ENCODE measurements at regions of chr12 and their contacts with region 1.

Region 1: GRCh38 chr12:49644620-49644994 is 21.2 kb downstream of the PRPF40B start:
- DNase-seq: peak; percentile 51
- H3K4me3 ChIP-seq: no peak overlapping the region
- H3K27ac ChIP-seq: peak overlapping the region; percentile 37
- H3K4me1 ChIP-seq: peaks cover 17% of the 10 kb centered on the region
- H3K27me3 ChIP-seq: no peaks in the 10 kb centered on the region
- CTCF ChIP-seq: peak; percentile 87 to 98

Region 2: DNA sequence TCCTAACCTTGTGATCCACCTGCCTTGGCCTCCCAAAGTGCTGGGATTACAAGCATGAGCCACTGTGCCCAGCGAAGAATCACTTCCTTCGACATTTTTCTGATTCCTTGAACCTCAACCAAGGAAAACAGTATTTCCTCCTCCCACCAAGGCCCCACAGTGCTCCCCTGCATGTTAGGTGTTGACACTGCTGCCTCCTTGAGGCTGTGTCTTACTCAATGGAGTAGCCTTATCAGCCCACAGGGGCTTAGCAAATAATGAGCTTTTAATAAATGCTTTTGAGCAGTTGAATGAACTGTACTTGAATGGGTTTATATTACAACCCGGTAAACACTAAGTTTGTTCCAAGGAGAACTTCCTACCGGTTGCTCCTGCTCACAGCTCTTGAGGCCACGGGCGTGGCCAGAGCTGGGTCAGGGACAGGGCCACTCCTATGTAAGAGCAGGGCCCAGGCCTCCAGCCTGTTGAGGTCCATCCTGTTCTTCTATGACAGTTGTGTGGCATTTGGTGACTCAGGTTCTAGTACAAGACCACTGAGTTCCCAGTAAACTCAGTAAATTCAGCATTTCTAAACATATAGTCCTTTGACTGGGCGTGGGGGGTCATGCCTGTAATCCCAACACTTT is 418.9 kb before region 1 on chr12:
- CTCF ChIA-PET with region 1: no interaction called
- dilution Hi-C with region 1: no loop called
- in situ Hi-C with region 1: no loop called
- intact Hi-C with region 1: no loop called
- DNase-seq: no peak
- H3K4me3 ChIP-seq: no peak overlapping the region
- H3K27ac ChIP-seq: no peak overlapping the region
- H3K4me1 ChIP-seq: peaks cover 8% of the 10 kb centered on the region
- H3K27me3 ChIP-seq: no peaks in the 10 kb centered on the region
- CTCF ChIP-seq: no peak

Region 3: GRCh38 chr12:49588721-49589516 is 55.7 kb before region 1 on chr12:
- CTCF ChIA-PET with region 1: no interaction called
- dilution Hi-C with region 1: no loop called
- in situ Hi-C with region 1: no loop called
- intact Hi-C with region 1: no loop called
- DNase-seq: peak; percentile 23
- H3K4me3 ChIP-seq: no peak overlapping the region
- H3K27ac ChIP-seq: no peak overlapping the region
- H3K4me1 ChIP-seq: peaks cover 4% of the 10 kb centered on the region
- H3K27me3 ChIP-seq: no peaks in the 10 kb centered on the region
- CTCF ChIP-seq: no peak

Region 4: GRCh38 chr12:49673446-49674317 is 29.1 kb after region 1 on chr12:
- CTCF ChIA-PET with region 1: interaction called, 3 read pairs
- dilution Hi-C with region 1: loop called (anchors 5 kb)
- in situ Hi-C with region 1: no loop called
- intact Hi-C with region 1: no loop called
- DNase-seq: peak; percentile 71
- H3K4me3 ChIP-seq: no peak overlapping the region
- H3K27ac ChIP-seq: peak overlapping the region; percentile 17
- H3K4me1 ChIP-seq: peaks cover 21% of the 10 kb centered on the region
- H3K27me3 ChIP-seq: no peaks in the 10 kb centered on the region
- CTCF ChIP-seq: peak; percentile 2 to 16

Region 5: GRCh38 chr12:49750027-49750995 is 105.7 kb after region 1 on chr12:
- CTCF ChIA-PET with region 1: no interaction called
- dilution Hi-C with region 1: no loop called
- in situ Hi-C with region 1: no loop called
- intact Hi-C with region 1: loop called (anchors 1 kb)
- DNase-seq: peak; percentile 90
- H3K4me3 ChIP-seq: peak overlapping the region in 1 of 3 experiments; percentile 19
- H3K27ac ChIP-seq: peak overlapping the region; percentile 54
- H3K4me1 ChIP-seq: peaks cover 21% of the 10 kb centered on the region
- H3K27me3 ChIP-seq: no peaks in the 10 kb centered on the region
- CTCF ChIP-seq: peak; percentile 14 to 40

Region 6: GRCh38 chr12:49763006-49763591 is 118.5 kb after region 1 on chr12:
- CTCF ChIA-PET with region 1: no interaction called
- dilution Hi-C with region 1: loop called (anchors 5 kb)
- in situ Hi-C with region 1: no loop called
- intact Hi-C with region 1: no loop called
- DNase-seq: peak; percentile 19
- H3K4me3 ChIP-seq: no peak overlapping the region
- H3K27ac ChIP-seq: no peak overlapping the region
- H3K4me1 ChIP-seq: no peaks in the 10 kb centered on the region
- H3K27me3 ChIP-seq: no peaks in the 10 kb centered on the region
- CTCF ChIP-seq: peak; percentile 69 to 70

Region 7: DNA sequence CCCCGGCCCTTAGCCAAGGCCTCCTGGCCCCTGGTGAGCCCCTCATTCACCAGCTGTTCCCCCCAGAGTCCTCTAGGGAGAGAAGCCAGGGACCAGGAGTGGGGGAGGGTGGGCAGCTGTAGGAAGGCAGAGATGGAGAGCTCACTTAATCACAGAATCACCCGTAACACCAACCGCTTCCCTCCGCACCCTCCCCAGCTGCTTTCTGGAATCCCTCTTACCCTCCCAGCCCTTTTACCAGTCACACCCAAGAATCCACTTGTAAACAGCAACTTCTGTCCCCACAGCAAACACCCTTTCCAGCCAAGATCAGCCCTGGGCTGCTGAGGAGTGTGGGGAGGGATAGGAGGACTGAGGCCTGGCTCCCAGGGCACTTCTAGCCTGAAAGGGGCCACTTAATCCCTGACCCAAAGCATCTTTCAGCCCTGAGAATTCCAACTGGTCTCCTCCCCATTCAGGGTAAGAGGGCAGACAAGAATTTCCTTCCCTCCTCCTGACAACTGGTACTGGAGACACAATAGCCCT is 164.8 kb after region 1 on chr12:
- CTCF ChIA-PET with region 1: no interaction called
- dilution Hi-C with region 1: loop called (anchors 10 kb)
- in situ Hi-C with region 1: no loop called
- intact Hi-C with region 1: no loop called
- DNase-seq: no peak
- H3K4me3 ChIP-seq: no peak overlapping the region
- H3K27ac ChIP-seq: no peak overlapping the region
- H3K4me1 ChIP-seq: no peaks in the 10 kb centered on the region
- H3K27me3 ChIP-seq: no peaks in the 10 kb centered on the region
- CTCF ChIP-seq: no peak

Region 8: DNA sequence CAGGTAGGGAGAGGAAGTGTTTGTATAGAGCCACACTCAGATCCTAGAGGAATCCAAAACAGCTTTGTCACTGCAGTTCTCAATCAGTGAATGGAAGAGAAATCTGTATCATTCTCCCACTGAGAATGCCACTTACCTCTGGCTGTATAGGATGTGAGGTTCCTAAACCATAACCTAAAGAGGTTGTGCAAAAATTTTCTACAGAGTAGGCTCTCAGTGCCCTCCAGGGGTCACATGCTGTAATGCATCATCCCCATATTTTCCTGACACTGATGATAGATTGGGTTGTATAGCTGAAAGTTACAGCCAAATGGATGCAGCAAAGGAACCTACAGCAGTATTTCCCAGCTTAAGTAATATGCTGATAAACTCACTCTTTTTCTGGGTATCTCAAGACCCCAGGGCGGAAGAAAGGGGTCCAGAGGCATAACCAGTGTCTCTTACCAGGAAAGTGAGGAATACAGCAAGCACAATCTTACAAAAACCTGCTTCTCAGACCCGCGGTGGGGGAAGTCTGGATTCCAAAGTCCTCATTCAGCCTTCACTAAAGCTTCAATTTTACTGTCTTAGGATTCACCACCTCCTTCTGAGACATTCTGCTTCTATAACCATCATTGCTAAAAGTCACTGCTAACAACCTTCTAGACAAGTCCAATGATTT is 194.5 kb after region 1 on chr12:
- CTCF ChIA-PET with region 1: no interaction called
- dilution Hi-C with region 1: no loop called
- in situ Hi-C with region 1: no loop called
- intact Hi-C with region 1: loop called (anchors 1 kb)
- DNase-seq: peak; percentile 40
- H3K4me3 ChIP-seq: no peak overlapping the region
- H3K27ac ChIP-seq: no peak overlapping the region
- H3K4me1 ChIP-seq: peaks cover 17% of the 10 kb centered on the region
- H3K27me3 ChIP-seq: no peaks in the 10 kb centered on the region
- CTCF ChIP-seq: peak; percentile 76 to 96